ENCODE measurements at regions of chr14 and their contacts with region 1.

Region 1: DNA sequence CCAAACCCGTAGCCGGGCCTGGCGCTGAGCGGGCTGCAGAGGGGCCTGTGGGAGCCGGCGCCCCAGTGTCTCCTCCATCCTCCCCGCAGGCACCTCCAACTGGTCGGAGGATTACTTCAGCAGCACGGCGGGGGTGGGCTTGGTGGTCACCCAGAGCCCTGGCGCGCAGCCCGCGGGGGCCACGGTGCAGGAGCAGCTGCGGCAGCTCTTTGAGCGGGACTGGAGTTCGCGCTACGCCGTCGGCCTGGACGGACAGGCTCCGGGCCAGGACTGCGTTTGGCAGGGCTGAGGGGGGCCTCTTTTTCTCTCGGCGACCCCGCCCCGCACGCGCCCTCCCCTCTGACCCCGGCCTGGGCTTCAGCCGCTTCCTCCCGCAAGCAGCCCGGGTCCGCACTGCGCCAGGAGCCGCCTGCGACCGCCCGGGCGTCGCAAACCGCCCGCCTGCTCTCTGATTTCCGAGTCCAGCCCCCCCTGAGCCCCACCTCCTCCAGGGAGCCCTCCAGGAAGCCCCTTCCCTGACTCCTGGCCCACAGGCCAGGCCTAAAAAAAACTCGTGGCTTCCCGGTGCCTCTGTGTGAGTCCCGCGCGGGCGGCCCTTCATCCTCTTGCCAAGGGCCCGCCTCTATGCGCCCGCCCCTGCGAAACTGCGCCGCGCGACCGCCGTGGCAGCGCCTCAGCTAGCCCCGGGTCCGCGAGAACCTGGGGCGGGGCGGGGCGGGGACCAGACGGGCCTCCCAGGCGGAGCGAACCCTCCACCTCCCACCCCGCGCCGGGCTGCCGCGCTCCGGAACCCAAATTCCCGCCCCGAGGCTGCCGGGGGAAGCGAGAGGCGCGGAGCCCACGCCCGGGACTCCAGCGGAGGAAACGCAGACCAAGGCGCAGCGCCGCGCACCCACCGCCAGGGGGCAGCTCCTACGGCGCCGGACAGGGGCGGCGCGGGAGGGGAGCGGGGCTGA is 8.3 kb downstream of the PLD4 start:
- DNase-seq: peak; percentile 74
- H3K4me3 ChIP-seq: peak overlapping the region; percentile 54 to 55
- H3K27ac ChIP-seq: peak overlapping the region; percentile 31 to 51
- H3K4me1 ChIP-seq: no peaks in the 10 kb centered on the region
- H3K27me3 ChIP-seq: no peaks in the 10 kb centered on the region
- CTCF ChIP-seq: peak; percentile 70 to 84 (median 77)
- POLR2A ChIP-seq: no peak

Region 2: GRCh38 chr14:104895786-104896661 is 36.9 kb before region 1 on chr14:
- intact Hi-C with region 1: loop called (anchors 5 kb)
- DNase-seq: peak; percentile 28
- H3K4me3 ChIP-seq: no peak overlapping the region
- H3K27ac ChIP-seq: peak overlapping the region; percentile 10 to 17
- H3K4me1 ChIP-seq: no peaks in the 10 kb centered on the region
- H3K27me3 ChIP-seq: no peaks in the 10 kb centered on the region
- CTCF ChIP-seq: no peak
- POLR2A ChIP-seq: no peak

Region 3: DNA sequence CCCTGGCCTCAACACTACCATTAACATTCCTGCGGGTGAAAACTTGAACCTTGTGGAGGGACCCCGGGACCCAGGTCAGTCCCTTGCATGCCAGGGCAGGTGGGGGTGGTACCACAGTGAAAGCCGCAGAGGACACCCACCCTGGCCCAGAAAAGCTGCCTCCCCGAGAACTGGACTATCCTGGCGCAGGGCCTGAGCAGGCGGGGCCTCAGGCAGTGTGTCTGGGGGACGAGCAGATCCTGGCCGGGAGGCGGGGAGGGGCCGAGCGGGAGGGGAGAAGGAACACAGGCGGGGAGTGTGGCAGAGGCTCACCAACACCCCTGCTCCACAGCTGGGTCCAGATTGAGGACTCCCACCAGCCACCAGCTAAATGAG is 35.2 kb after region 1 on chr14:
- intact Hi-C with region 1: loop called (anchors 5 kb)
- DNase-seq: peak; percentile 66
- H3K4me3 ChIP-seq: peak overlapping the region; percentile 8 to 19
- H3K27ac ChIP-seq: peak overlapping the region; percentile 62 to 83
- H3K4me1 ChIP-seq: peaks cover 34% of the 10 kb centered on the region
- H3K27me3 ChIP-seq: no peaks in the 10 kb centered on the region
- CTCF ChIP-seq: no peak
- POLR2A ChIP-seq: no peak

Region 4: GRCh38 chr14:104981699-104982541 is 49.0 kb after region 1 on chr14:
- intact Hi-C with region 1: loop called (anchors 2 kb)
- DNase-seq: no peak
- H3K4me3 ChIP-seq: no peak overlapping the region
- H3K27ac ChIP-seq: no peak overlapping the region
- H3K4me1 ChIP-seq: peaks cover 9% of the 10 kb centered on the region
- H3K27me3 ChIP-seq: no peaks in the 10 kb centered on the region
- CTCF ChIP-seq: no peak
- POLR2A ChIP-seq: no peak

Region 5: GRCh38 chr14:105430535-105430934 is 497.6 kb after region 1 on chr14:
- intact Hi-C with region 1: no loop called
- DNase-seq: no peak
- H3K4me3 ChIP-seq: no peak overlapping the region
- H3K27ac ChIP-seq: no peak overlapping the region
- H3K4me1 ChIP-seq: no peaks in the 10 kb centered on the region
- H3K27me3 ChIP-seq: no peaks in the 10 kb centered on the region
- CTCF ChIP-seq: no peak
- POLR2A ChIP-seq: no peak

Region 6: DNA sequence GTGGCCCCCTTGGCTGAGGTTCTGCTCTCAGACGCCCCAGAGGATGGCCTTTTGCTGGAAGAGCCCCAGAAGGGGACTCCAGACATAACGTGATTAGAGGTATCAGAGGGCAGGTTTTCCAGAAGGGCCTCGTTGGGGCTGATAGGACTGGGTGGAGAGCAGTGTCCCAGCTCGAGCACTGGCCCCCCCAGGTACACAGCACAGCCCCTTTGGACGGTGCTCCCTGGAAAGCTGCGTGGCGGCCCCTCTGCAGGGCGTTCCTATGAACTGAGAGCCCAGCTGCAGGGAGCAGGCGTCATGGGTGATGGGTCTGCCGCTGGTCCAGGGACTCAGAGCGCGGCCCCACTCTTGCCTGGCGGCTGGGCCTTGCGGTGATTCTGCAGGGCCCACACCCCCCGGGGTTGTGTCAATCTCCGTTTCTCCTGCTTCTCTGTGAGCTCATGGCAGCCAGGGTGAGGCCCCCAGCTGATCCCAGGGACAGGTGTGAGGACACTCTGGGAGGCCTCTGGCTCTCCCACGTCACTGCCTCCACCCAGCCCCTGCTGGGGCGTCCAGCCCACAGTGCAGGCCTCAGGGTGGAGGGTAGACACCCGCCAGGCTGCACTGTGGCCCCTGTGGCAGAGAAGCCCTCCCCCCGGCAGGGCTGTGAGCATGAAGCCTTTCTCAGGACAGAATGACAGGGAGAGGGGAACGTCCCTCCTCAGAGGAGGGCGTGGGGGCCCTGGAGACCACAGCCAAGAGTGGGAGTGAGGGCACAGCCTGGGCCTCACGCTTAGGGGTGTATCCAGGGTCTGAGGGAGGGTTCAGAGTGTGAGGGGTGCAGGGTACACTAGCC is 514.7 kb after region 1 on chr14:
- intact Hi-C with region 1: no loop called
- DNase-seq: no peak
- H3K4me3 ChIP-seq: no peak overlapping the region
- H3K27ac ChIP-seq: no peak overlapping the region
- H3K4me1 ChIP-seq: no peaks in the 10 kb centered on the region
- H3K27me3 ChIP-seq: no peaks in the 10 kb centered on the region
- CTCF ChIP-seq: no peak
- POLR2A ChIP-seq: no peak